ENCODE measurements at regions of chr3 and their contacts with region 1.

Region 1: DNA sequence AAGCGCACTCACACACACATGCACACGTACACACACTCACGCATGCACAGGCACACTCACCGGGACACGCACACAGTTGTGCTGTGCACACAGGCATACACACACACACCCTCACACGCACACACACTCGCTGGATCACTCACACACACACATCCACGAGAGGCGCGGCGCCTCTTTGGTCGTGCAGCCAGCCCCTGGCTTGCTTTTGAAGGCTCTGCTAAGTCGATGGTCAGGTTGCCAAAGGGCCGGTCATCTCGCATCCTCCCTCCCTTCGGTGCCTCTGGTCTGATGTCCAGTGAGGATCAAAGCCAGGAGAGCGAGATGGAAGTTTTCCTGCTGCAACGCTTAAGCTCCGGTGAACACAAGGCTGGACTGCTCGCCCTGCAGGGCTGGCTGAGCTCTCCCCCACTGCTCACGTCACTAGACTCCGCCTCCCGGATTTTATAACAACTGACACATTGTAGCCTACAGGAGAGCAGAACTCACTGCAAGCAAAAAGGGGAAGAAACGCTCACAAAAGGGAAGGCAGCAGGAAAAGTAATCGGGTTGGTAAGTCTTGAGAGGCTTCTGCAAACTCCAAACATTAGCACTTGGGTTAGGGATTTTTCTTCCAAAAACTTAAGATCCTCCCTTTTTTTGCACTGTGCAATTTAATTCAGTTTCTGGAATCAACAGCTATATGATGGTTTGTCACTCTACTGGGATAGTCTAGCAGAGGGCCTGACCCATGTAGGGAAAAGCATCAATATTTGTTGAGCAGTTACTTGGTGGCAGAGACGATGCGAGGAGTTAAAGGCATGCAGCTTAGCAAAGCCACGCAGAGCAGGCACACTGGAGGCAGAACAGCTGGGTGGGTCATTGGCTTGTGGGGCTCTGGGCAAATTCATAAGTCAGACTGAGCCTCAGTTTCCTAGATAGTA is at the start of gene SRGAP3:
- DNase-seq: peak; percentile 92
- ATAC-seq: peak; percentile 100
- H3K4me3 Mint-ChIP-seq: peak within 1 kb of the TSS; percentile 82
- H3K27ac Mint-ChIP-seq: peak within 1 kb of the TSS; percentile 40
- H3K4me1 Mint-ChIP-seq: peaks cover 38% of the 10 kb centered on the region
- H3K27me3 Mint-ChIP-seq: peaks cover 23% of the 10 kb centered on the region
- total RNA-seq, gene SRGAP3: 5.3 to 5.9 TPM

Region 2: GRCh38 chr3:8678751-8679150 is 570.8 kb before region 1 on chr3:
- CTCF ChIA-PET with region 1: no interaction called
- POLR2A ChIA-PET with region 1: no interaction called
- DNase-seq: no peak
- ATAC-seq: no peak
- H3K4me3 Mint-ChIP-seq: no peak overlapping the region
- H3K27ac Mint-ChIP-seq: no peak overlapping the region
- H3K4me1 Mint-ChIP-seq: no peaks in the 10 kb centered on the region
- H3K27me3 Mint-ChIP-seq: no peaks in the 10 kb centered on the region

Region 3: GRCh38 chr3:8959668-8960067 is 289.9 kb before region 1 on chr3:
- CTCF ChIA-PET with region 1: no interaction called
- POLR2A ChIA-PET with region 1: no interaction called
- DNase-seq: no peak
- ATAC-seq: no peak
- H3K4me3 Mint-ChIP-seq: no peak overlapping the region
- H3K27ac Mint-ChIP-seq: no peak overlapping the region
- H3K4me1 Mint-ChIP-seq: peaks cover 41% of the 10 kb centered on the region
- H3K27me3 Mint-ChIP-seq: no peaks in the 10 kb centered on the region

Region 4: GRCh38 chr3:8970971-8971589 is 278.5 kb before region 1 on chr3:
- CTCF ChIA-PET with region 1: interaction called, 10 read pairs
- POLR2A ChIA-PET with region 1: no interaction called
- DNase-seq: peak; percentile 79
- ATAC-seq: peak; percentile 74
- H3K4me3 Mint-ChIP-seq: no peak overlapping the region
- H3K27ac Mint-ChIP-seq: no peak overlapping the region
- H3K4me1 Mint-ChIP-seq: peaks cover 3% of the 10 kb centered on the region
- H3K27me3 Mint-ChIP-seq: peaks cover 10% of the 10 kb centered on the region

Region 5: GRCh38 chr3:8987645-8988383 is 261.7 kb before region 1 on chr3:
- CTCF ChIA-PET with region 1: interaction called, 29 read pairs
- POLR2A ChIA-PET with region 1: no interaction called
- DNase-seq: peak; percentile 79
- ATAC-seq: peak; percentile 84
- H3K4me3 Mint-ChIP-seq: no peak overlapping the region
- H3K27ac Mint-ChIP-seq: no peak overlapping the region
- H3K4me1 Mint-ChIP-seq: peaks cover 6% of the 10 kb centered on the region
- H3K27me3 Mint-ChIP-seq: no peaks in the 10 kb centered on the region

Region 6: DNA sequence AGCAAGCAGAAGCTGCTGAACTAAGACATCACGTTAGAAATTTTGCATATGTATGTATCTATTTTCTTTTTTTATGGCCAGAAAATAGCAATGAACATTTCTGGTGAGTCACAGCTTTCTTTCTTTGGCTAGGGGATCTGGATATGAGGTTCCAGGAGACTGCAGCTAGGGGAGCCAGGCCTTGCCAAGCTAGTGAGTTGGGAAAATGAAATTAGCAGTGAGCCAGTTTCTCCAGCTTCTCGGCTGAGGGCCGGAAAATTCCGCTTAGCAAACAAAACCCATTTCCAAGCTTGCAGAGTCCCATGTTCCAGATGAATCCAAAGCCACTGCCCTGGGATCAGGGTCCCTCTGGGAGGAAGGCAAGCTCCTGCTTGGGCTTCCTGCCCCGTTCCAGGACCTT is 137.7 kb before region 1 on chr3:
- CTCF ChIA-PET with region 1: no interaction called
- POLR2A ChIA-PET with region 1: no interaction called
- DNase-seq: no peak
- ATAC-seq: no peak
- H3K4me3 Mint-ChIP-seq: no peak overlapping the region
- H3K27ac Mint-ChIP-seq: no peak overlapping the region
- H3K4me1 Mint-ChIP-seq: no peaks in the 10 kb centered on the region
- H3K27me3 Mint-ChIP-seq: peaks cover 4% of the 10 kb centered on the region

Region 7: DNA sequence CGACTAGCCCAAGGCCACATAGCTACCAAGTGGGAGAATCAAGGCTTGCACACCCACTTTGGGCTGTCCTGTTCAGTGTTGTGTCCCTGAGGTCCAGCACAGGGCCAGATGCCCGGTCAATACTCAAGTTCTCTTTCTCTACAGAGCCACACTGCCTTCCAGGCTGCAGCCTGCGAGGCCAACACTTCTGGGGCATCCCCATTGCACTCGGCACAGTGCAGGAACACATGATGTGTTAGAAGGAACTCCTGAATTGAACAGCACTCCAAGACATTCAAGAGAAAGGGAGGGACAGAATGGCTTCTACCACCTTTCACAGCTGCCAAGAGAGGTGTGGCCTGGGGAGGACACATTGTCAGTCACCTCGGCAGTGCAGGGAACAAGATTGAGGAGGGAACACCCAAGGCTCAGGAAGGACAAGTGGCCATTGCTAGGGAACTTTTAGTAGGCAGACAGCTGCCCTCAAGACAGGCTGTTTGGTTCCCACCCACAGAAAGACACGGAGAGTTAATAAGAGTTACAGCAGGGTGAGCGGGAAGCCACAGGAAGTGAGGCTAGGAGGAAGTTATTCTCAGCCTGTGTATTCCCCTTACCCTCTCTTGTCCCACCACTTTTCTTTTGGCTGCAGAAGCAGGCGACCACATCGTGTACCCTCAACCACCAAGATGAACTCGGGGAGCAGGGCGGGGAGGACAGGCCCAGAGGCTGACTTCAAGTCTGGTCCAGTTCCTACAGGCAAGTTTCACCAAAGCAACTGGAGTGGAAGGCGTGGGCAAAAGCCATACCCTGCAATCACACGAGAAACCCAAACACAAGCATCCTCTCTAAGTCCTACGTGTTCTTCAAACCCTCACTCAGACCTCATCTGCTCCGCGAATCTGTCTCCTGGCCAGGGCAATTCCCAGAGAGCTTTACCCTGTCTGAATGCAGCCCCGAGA is 69.4 kb before region 1 on chr3:
- CTCF ChIA-PET with region 1: interaction called, 10 read pairs
- POLR2A ChIA-PET with region 1: no interaction called
- DNase-seq: peak; percentile 53
- ATAC-seq: peak; percentile 63
- H3K4me3 Mint-ChIP-seq: peak overlapping the region; percentile 60
- H3K27ac Mint-ChIP-seq: peak overlapping the region; percentile 87
- H3K4me1 Mint-ChIP-seq: peaks cover 54% of the 10 kb centered on the region
- H3K27me3 Mint-ChIP-seq: peaks cover 6% of the 10 kb centered on the region

Region 8: GRCh38 chr3:9224490-9224889 is 25.0 kb before region 1 on chr3:
- CTCF ChIA-PET with region 1: interaction called, 15 read pairs
- POLR2A ChIA-PET with region 1: no interaction called
- DNase-seq: peak; percentile 46
- ATAC-seq: peak; percentile 35
- H3K4me3 Mint-ChIP-seq: no peak overlapping the region
- H3K27ac Mint-ChIP-seq: peak overlapping the region; percentile 30
- H3K4me1 Mint-ChIP-seq: peaks cover 40% of the 10 kb centered on the region
- H3K27me3 Mint-ChIP-seq: no peaks in the 10 kb centered on the region

Region 9: GRCh38 chr3:9330166-9330703 is 80.7 kb after region 1 on chr3:
- CTCF ChIA-PET with region 1: no interaction called
- POLR2A ChIA-PET with region 1: no interaction called
- DNase-seq: no peak
- ATAC-seq: no peak
- H3K4me3 Mint-ChIP-seq: no peak overlapping the region
- H3K27ac Mint-ChIP-seq: no peak overlapping the region
- H3K4me1 Mint-ChIP-seq: no peaks in the 10 kb centered on the region
- H3K27me3 Mint-ChIP-seq: peaks cover 11% of the 10 kb centered on the region